ENCODE measurements at regions of chr11 and their contacts with region 1.

Region 1: GRCh38 chr11:65225279-65226102 is 36.3 kb upstream of the POLA2 start:
- DNase-seq: peak in 1 of 2 experiments; percentile 32
- ATAC-seq: peak; percentile 68 to 82
- H3K4me3 ChIP-seq: no peak overlapping the region
- H3K27ac ChIP-seq: peak overlapping the region in 1 of 2 experiments; percentile 45; a peak in 2 of 6 replicates
- H3K4me1 ChIP-seq: peaks cover 9% of the 10 kb centered on the region
- CTCF ChIP-seq: peak; percentile 23; the same call in 1 of the 3 replicates
- EP300 ChIP-seq: no peak
- POLR2A ChIP-seq: no peak
- RAD21 ChIP-seq: peak; percentile 31 to 42; a peak in 2 of 5 replicates

Region 2: GRCh38 chr11:65053827-65054508 is 171.5 kb before region 1 on chr11:
- CTCF ChIA-PET with region 1: no interaction called
- POLR2A ChIA-PET with region 1: no interaction called
- DNase-seq: no peak
- ATAC-seq: 0 out of 6 replicates have a peak, but pooled peaks of 1 of the 2 experiments have one; percentile 27
- H3K4me3 ChIP-seq: no peak overlapping the region
- H3K27ac ChIP-seq: no peak overlapping the region
- H3K4me1 ChIP-seq: no peaks in the 10 kb centered on the region
- CTCF ChIP-seq: no peak
- EP300 ChIP-seq: no peak
- POLR2A ChIP-seq: no peak
- RAD21 ChIP-seq: no peak

Region 3: GRCh38 chr11:65251476-65251875 is 26.0 kb after region 1 on chr11:
- CTCF ChIA-PET with region 1: interaction called, 30 read pairs
- POLR2A ChIA-PET with region 1: no interaction called
- DNase-seq: no peak
- ATAC-seq: 0 out of 6 replicates have a peak, but pooled peaks of 1 of the 2 experiments have one; percentile 5
- H3K4me3 ChIP-seq: no peak overlapping the region
- H3K27ac ChIP-seq: no peak overlapping the region
- H3K4me1 ChIP-seq: no peaks in the 10 kb centered on the region
- CTCF ChIP-seq: no peak
- EP300 ChIP-seq: no peak
- POLR2A ChIP-seq: no peak
- RAD21 ChIP-seq: no peak

Region 4: DNA sequence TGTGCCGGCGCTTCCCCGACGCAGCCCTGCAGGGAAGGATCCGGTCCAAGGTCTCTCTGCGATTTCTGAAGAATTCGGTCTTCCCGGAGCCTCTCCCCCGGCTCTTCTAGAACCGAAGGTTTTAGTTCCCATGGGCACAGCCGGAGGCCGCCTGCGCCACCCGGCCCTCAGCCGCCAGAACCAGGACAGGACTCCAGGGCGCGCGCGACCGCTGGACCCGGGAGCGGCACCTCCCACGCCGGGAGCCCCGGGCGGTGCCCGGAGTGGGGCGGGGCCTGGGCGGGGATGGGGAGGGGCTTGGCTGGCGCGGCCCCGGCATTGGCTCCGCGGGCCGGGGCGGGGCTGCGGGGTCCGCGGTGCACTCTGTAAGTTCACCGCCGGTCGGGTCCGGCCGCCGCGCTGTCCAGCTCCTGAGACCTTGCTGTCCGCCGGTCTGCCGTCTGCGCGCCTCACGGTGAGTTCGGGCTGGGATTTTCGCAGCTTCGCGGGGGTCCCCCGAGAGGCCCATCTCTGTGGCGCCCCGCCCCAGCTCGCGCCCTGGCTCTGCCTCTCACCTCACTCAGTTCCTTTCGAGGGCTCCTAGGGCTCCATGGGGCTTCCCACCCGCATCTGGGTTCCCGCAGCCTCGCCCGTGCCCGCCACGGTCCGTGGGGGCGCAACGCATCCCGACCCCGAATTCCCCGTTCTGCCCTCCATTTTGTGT is 89.2 kb after region 1 on chr11 and contains the start of gene CDC42EP2:
- CTCF ChIA-PET with region 1: interaction called, 11 read pairs
- POLR2A ChIA-PET with region 1: no interaction called
- DNase-seq: peak; percentile 77 to 84
- ATAC-seq: peak; percentile 73 to 88
- H3K4me3 ChIP-seq: peak within 1 kb of the TSS; percentile 99
- H3K27ac ChIP-seq: peak within 1 kb of the TSS; percentile 91
- H3K4me1 ChIP-seq: peaks cover 55% of the 10 kb centered on the region
- CTCF ChIP-seq: no peak
- EP300 ChIP-seq: no peak
- POLR2A ChIP-seq: peak; percentile 70
- RAD21 ChIP-seq: no peak
- polyA plus RNA-seq, gene CDC42EP2: 3.0 and 3.7 TPM in 2 replicates

Region 5: GRCh38 chr11:65366340-65366773 is 140.9 kb after region 1 on chr11:
- CTCF ChIA-PET with region 1: no interaction called
- POLR2A ChIA-PET with region 1: no interaction called
- DNase-seq: peak; percentile 88 to 90
- ATAC-seq: peak; percentile 84 to 85
- H3K4me3 ChIP-seq: no peak overlapping the region
- H3K27ac ChIP-seq: peak overlapping the region; percentile 45 to 72; a peak in 5 of 6 replicates
- H3K4me1 ChIP-seq: peaks cover 18% of the 10 kb centered on the region
- CTCF ChIP-seq: peak; percentile 85
- EP300 ChIP-seq: no peak
- POLR2A ChIP-seq: no peak
- RAD21 ChIP-seq: peak; percentile 91 to 96

Measured in A549 (cell line).